ENCODE measurements at regions of chr20 and their contacts with region 1.

Region 1: DNA sequence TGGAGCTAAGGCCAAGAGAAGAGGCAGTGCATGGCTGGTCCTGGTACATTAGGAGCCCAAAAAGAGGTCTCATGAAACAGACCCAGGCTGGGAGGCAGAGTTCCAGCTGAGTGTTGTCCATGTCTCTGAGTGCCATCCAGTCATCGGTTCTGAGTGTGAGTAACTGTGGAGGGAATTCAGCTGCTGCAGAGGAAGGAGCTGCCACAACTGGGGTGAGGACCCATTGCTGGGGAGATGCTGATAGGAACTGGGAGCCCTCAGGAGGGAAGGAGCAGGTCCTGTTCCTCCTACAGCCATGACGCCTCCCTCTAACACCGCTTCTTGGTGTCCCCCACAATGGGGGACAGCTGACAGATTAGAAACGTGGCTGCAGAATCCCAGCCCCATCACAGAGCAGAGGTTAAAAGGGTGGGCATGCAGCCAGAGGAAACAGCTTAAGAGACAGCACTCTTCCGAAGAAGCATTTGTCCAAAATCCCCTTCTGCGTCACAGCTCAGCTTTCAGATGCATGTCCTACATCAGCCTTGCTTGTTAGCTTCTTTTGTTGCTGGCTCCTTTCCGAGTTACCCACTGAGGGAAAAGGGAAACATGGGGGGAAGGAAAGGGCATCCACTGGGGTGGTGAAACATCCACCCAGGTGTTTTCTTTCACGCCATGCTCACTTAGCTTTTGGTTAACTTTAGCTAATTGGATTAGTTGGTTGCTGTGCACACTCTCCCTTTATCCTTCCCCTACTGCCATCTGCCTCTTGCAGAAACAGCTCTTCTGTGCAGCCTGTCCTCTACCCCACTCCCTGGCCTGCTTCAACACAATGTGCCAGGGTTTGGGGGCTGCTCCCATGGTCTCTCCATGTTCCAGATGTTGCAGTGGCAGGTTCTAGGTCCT is 239.2 kb downstream of the SYNDIG1 start:
- DNase-seq: no peak
- ATAC-seq: no peak
- H3K4me3 ChIP-seq: no peak overlapping the region
- H3K27ac ChIP-seq: no peak overlapping the region
- H3K4me1 ChIP-seq: no peaks in the 10 kb centered on the region
- H3K27me3 ChIP-seq: peaks cover 67% of the 10 kb centered on the region
- CTCF ChIP-seq: no peak

Region 2: DNA sequence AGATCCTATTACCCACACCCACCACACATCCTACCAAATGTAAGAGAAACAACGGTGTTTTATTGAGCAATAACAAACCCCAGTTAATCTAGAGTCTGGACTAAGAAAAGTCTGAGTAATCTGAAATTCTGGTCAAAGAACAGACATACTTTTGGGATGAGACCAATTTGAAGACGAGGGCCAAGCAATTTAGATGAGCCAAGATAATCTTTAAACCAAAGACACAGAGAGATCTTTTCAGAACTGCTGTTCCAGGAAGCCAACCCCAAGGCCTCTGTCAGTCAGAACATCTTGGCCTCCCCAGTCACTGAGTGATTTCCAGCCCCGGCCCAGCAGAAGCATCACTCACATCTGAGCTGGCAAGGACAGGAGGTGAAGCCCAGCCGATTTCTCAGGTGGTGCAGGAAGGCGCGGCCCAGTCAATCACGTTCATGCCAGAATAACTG is 357.7 kb before region 1 on chr20:
- CTCF ChIA-PET with region 1: no interaction called
- POLR2A ChIA-PET with region 1: no interaction called
- intact Hi-C with region 1: loop called (anchors 5 kb)
- DNase-seq: no peak
- ATAC-seq: no peak
- H3K4me3 ChIP-seq: no peak overlapping the region
- H3K27ac ChIP-seq: no peak overlapping the region
- H3K4me1 ChIP-seq: no peaks in the 10 kb centered on the region
- H3K27me3 ChIP-seq: peaks cover 75% of the 10 kb centered on the region
- CTCF ChIP-seq: no peak

Region 3: GRCh38 chr20:24746351-24746685 is 37.7 kb after region 1 on chr20:
- CTCF ChIA-PET with region 1: no interaction called
- POLR2A ChIA-PET with region 1: no interaction called
- intact Hi-C with region 1: no loop called
- DNase-seq: peak; percentile 87
- ATAC-seq: peak; percentile 57
- H3K4me3 ChIP-seq: no peak overlapping the region
- H3K27ac ChIP-seq: no peak overlapping the region
- H3K4me1 ChIP-seq: peaks cover 15% of the 10 kb centered on the region
- H3K27me3 ChIP-seq: no peaks in the 10 kb centered on the region; the same call in none of the 2 replicates
- CTCF ChIP-seq: no peak